ENCODE measurements at regions of chr15 and their contacts with region 1.

Region 1: DNA sequence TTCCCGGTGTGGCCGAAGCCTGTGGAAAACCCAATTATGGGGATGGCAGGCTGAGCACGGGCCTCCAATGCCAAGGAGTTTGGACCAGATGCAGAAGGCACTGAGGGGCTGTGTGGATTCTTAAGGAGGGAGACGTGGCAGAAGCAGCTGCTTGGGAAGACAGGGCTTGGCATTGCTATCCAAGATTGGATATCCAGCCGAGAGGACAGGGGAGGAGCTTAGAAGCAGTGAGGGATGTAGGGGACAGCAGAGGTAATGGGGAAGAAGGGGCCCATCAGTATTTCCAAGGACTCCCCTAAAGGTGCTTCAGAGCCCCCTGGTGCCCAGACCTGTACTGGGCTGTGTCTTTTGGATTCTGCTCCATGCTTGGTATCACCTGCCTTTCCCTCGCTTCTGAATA is 112.8 kb upstream of the TLE3 start:
- DNase-seq: no peak
- H3K4me3 ChIP-seq: no peak overlapping the region
- H3K27ac ChIP-seq: no peak overlapping the region
- H3K4me1 ChIP-seq: peaks cover 37 to 40% of the 10 kb centered on the region in 2 donors
- H3K27me3 ChIP-seq: no peaks in the 10 kb centered on the region
- CTCF ChIP-seq: no peak
- POLR2A ChIP-seq: no peak

Region 2: GRCh38 chr15:70291295-70291694 is 80.8 kb after region 1 on chr15:
- intact Hi-C with region 1: loop called (anchors 5 kb)
- DNase-seq: no peak
- H3K4me3 ChIP-seq: no peak overlapping the region
- H3K27ac ChIP-seq: peak overlapping the region in 2 of 3 donors; percentile 22 to 71
- H3K4me1 ChIP-seq: peaks cover 59 to 71% of the 10 kb centered on the region in 2 donors
- H3K27me3 ChIP-seq: no peaks in the 10 kb centered on the region
- CTCF ChIP-seq: no peak
- POLR2A ChIP-seq: no peak

Region 3: DNA sequence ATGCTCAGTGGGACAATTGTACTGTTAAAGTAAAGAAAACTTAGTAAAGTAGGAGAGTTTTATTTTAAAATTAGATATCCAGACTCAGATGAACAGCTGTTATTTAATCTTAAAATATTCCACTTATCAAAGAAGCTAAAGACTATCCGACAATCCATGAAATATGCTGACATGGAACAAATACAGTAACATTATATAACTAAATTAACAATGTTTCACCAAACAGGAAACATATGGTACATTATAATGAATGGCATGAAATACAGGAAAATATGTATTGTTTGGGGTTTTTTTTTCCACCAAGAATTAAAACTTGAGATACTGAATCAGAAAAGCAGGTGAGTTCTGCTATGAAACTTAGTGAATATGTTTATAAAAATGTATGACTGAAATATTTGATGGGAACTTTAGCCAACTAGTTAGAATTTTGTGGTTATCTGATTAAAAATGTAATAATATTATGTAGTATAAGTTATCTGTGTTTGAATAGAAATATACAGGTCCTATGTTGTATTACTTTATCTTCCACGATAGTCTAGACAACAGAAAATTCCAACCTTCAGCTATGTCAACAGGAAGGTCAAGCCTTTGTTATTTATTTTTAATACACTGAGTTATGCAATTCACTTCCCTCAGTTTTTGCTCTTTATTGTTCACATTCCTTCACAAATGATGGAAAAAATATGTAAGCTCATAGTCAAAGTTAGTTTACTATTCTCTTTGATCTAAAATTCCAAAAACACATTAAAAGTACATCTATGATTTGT is 480.1 kb after region 1 on chr15:
- intact Hi-C with region 1: no loop called
- DNase-seq: no peak
- H3K4me3 ChIP-seq: no peak overlapping the region
- H3K27ac ChIP-seq: peak overlapping the region in 1 of 3 donors; percentile 18
- H3K4me1 ChIP-seq: peaks cover 26 to 30% of the 10 kb centered on the region in 2 donors
- H3K27me3 ChIP-seq: no peaks in the 10 kb centered on the region
- CTCF ChIP-seq: no peak
- POLR2A ChIP-seq: no peak

Measured in thyroid gland (tissue), 4 donors.